ENCODE measurements at regions of chr3 and their contacts with region 1.

Region 1: DNA sequence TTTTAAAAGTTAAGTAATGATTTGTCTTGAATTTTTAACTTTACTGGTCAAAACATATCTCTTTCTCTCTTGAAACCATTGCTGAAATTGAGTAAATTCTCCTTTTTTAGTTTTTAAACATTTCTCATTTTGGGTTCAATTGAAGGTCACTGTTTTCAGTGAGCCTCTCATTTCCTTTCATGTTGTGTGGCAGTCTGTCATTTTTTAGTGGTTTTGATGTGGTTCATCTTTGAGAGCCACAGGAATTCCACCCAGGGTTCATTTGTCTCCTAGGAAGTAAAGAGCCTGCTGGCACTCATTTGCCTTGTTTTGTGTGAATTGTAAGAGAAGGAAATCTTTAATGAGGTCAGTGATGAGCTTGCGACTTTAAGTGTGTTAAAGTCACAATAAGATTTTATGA is 10.4 kb downstream of the CLDN11 start:
- DNase-seq: peak; percentile 50
- H3K4me3 ChIP-seq: no peak overlapping the region
- H3K27ac ChIP-seq: no peak overlapping the region
- H3K4me1 ChIP-seq: peaks cover 5% of the 10 kb centered on the region
- H3K27me3 ChIP-seq: no peaks in the 10 kb centered on the region
- CTCF ChIP-seq: no peak

Region 2: DNA sequence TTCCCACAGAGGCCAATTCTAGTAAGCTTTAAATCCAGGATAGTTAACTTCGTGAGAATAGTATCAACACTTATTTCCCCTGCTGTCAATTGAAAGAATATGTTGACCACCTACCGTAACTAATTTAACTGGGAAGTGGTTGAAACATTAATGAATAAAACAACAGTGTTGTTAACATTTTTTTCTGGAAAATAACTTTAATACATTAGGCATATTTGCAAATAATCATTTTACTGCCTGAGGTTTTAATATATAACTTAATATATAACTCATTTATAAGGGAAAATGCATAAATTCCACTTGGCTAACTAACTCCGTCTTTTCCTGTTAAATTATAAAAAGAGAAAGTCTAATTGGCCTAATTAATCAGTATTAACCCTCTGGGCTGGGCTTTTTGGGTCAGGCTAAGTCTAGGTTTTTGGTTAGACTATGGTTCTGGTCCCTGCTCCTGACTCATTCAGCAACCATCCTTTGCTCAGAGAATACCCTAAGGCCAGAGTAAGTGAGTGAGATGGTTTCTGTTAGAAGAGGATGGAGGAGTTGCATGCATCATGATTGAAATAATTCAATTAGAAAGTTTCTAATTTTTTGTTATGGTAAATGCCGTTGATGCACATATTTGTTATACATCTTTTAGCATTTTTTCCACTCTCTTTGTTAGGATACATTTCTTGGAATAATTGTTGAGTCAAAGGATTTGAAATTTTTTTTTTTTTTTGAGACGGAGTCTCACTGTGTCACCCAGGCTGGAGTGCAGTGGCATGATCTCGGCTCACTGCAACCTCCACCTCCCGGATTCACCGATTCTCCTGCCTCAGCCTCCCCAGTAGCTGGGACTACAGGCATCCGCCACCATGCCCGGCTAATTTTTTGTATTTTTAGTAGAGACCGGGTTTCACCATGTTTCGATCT is 82.3 kb before region 1 on chr3:
- CTCF ChIA-PET with region 1: no interaction called
- dilution Hi-C with region 1: loop called (anchors 5 kb)
- in situ Hi-C with region 1: no loop called
- intact Hi-C with region 1: no loop called
- DNase-seq: peak; percentile 60
- H3K4me3 ChIP-seq: no peak overlapping the region
- H3K27ac ChIP-seq: no peak overlapping the region
- H3K4me1 ChIP-seq: peaks cover 3% of the 10 kb centered on the region
- H3K27me3 ChIP-seq: no peaks in the 10 kb centered on the region
- CTCF ChIP-seq: no peak

Region 3: GRCh38 chr3:170520996-170521395 is 91.9 kb after region 1 on chr3:
- CTCF ChIA-PET with region 1: no interaction called
- dilution Hi-C with region 1: no loop called
- in situ Hi-C with region 1: no loop called
- intact Hi-C with region 1: no loop called
- DNase-seq: no peak
- H3K4me3 ChIP-seq: no peak overlapping the region
- H3K27ac ChIP-seq: no peak overlapping the region
- H3K4me1 ChIP-seq: no peaks in the 10 kb centered on the region
- H3K27me3 ChIP-seq: no peaks in the 10 kb centered on the region
- CTCF ChIP-seq: no peak

Measured in mammary epithelial cell (primary cell).